MCF 10A (cell line): ENCODE measurements at regions of chr16 and their contacts with region 1.

Region 1: GRCh38 chr16:361872-362701 is 8.3 kb downstream of the MRPL28 start:
- DNase-seq: peak; percentile 86
- H3K4me3 Mint-ChIP-seq: no peak overlapping the region
- H3K27ac Mint-ChIP-seq: no peak overlapping the region
- H3K4me1 Mint-ChIP-seq: no peaks in the 10 kb centered on the region
- H3K27me3 Mint-ChIP-seq: no peaks in the 10 kb centered on the region
- CTCF ChIP-seq: peak; percentile 92

Region 2: GRCh38 chr16:65671-66137 is 296.4 kb before region 1 on chr16:
- CTCF ChIA-PET with region 1: interaction called, 26 read pairs
- POLR2A ChIA-PET with region 1: no interaction called
- intact Hi-C with region 1: loop called (anchors 1 kb)
- DNase-seq: peak; percentile 76
- H3K4me3 Mint-ChIP-seq: no peak overlapping the region
- H3K27ac Mint-ChIP-seq: no peak overlapping the region
- H3K4me1 Mint-ChIP-seq: no peaks in the 10 kb centered on the region
- H3K27me3 Mint-ChIP-seq: no peaks in the 10 kb centered on the region
- CTCF ChIP-seq: peak; percentile 98

Region 3: DNA sequence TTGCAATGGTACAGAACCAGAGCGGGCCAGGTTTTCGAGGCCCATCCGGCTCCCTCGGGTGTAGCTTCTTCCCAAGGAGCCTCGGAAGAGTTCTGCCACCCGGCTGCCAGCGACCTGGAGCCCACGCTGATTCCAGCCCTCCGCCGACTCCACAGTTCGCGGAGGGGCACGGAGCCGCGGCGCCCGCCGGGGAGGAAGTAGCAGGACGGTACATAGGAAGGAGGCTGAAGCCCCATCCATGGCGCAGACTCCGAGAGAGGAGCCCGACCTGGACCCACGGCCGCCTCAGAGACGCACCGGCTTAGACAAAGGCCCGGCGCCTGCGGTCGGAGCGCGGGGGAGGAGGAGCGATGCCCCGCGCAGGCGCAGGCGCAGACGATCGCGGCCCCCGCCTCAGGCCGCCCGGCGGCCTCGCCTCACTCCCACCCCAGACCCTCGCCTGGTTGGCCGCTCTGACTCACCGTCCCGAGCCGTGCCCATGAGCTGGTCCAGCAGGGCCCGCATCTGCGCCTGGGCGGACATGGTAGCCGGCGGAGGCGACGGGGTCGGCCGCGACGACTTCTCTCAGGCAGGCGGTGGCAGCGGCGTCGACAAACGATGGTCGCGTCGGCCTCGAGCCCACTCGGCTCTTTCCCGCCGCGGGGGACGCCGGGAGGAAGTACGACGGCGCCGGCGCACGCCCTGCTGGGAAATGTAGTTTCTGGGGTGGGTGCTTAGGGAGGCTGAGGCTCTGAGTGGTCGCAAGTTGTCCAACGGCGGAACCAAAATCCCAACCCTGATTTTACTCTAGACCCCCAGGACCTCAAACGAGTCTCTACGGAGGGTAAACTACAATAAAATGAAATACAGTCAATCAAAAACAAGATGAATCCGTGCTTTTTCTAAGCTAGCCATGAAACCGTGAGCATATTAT is 133.0 kb before region 1 on chr16 and contains the start of gene LUC7L:
- CTCF ChIA-PET with region 1: interaction called, 8 read pairs
- POLR2A ChIA-PET with region 1: interaction called, 11 read pairs
- intact Hi-C with region 1: loop called (anchors 2 kb)
- DNase-seq: peak; percentile 85
- H3K4me3 Mint-ChIP-seq: peak within 1 kb of the TSS; percentile 87
- H3K27ac Mint-ChIP-seq: peak within 1 kb of the TSS; percentile 84
- H3K4me1 Mint-ChIP-seq: peaks cover 5% of the 10 kb centered on the region
- H3K27me3 Mint-ChIP-seq: no peaks in the 10 kb centered on the region
- CTCF ChIP-seq: no peak
- total RNA-seq, gene LUC7L: 58.9 and 74.1 TPM in 2 replicates

Region 4: DNA sequence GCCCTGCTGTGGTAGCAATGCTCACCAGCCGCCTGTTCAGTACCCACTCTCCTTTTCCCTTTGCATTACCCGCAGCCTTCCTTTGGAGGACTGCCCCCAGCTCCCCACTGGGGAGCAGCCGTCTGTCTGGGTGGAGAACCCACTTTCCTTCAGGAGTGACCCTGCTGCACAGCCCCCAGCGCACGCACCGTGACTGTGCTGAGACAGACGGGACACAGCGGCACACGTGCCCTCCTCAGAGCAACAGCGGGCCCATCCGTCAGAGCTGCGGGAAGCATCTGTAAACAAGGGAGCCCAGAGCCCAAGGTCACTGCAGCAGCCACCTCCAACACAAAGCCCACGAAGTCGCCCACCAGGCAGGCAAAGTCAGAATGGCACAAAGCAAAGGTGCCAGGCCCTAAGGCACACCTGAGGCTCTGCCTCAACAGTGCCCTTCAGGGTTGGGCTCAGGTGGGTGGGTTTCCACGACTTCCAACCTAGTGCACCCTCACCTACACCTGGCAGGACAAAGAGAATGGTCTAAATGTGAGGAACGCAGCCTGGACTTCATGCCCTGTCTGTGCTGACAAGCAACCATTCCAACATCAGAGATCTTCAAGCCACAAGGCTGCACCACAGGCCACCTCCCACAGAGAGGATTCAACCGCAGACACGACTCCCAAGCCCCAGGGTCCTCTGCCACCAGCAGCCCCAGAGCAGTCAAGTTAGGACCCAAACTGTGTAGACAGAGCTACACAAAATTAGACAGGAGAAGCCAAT is 19.5 kb before region 1 on chr16:
- CTCF ChIA-PET with region 1: interaction called, 10 read pairs
- POLR2A ChIA-PET with region 1: no interaction called
- intact Hi-C with region 1: no loop called
- DNase-seq: no peak
- H3K4me3 Mint-ChIP-seq: no peak overlapping the region
- H3K27ac Mint-ChIP-seq: no peak overlapping the region
- H3K4me1 Mint-ChIP-seq: peaks cover 14% of the 10 kb centered on the region
- H3K27me3 Mint-ChIP-seq: no peaks in the 10 kb centered on the region
- CTCF ChIP-seq: no peak

Region 5: DNA sequence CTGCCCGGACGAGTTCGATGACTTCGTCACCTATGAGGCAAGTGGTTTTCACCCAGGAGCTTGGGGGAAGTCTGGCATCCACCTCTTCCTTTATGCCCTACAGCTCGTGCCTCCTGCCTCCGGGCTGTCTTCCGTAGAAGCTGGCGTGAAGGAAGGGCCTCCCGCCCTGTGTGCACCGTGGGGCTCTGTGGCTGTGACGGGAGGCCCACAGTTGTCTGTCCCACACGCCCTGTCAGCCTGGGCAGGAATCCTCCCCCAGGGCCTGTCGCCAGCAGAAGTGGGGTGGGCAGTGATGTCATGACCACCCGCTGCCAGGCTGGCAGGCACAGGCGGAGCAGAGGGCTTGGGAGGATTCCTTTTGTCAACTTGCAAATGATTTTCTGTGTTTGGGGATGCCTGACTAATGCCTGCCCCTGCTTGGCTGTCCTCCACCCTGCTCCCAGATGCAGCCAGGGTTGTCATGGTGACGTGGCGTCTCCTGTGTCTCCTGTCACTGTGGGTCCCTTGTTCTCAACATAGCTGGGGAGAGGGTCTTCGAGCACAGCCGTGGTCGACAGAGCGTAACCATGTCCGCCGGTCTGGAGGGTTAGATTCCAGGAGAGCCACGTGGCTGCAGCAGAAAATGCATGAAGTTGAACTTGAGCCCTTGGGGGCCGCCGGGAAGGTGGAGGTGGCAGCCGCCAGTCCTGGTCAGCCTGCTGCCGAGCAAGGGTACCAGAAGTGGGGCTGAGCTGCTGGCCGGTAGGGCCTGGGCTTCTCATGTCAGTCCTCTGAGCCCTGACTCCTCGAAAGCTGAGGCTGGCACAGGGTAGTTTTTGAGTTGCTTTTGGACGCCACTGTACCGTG is 109.5 kb after region 1 on chr16:
- CTCF ChIA-PET with region 1: no interaction called
- POLR2A ChIA-PET with region 1: no interaction called
- intact Hi-C with region 1: no loop called
- DNase-seq: peak; percentile 30
- H3K4me3 Mint-ChIP-seq: no peak overlapping the region
- H3K27ac Mint-ChIP-seq: peak overlapping the region; percentile 71
- H3K4me1 Mint-ChIP-seq: no peaks in the 10 kb centered on the region
- H3K27me3 Mint-ChIP-seq: no peaks in the 10 kb centered on the region
- CTCF ChIP-seq: no peak